ENCODE measurements at regions of chr1 and their contacts with region 1.

Region 1: DNA sequence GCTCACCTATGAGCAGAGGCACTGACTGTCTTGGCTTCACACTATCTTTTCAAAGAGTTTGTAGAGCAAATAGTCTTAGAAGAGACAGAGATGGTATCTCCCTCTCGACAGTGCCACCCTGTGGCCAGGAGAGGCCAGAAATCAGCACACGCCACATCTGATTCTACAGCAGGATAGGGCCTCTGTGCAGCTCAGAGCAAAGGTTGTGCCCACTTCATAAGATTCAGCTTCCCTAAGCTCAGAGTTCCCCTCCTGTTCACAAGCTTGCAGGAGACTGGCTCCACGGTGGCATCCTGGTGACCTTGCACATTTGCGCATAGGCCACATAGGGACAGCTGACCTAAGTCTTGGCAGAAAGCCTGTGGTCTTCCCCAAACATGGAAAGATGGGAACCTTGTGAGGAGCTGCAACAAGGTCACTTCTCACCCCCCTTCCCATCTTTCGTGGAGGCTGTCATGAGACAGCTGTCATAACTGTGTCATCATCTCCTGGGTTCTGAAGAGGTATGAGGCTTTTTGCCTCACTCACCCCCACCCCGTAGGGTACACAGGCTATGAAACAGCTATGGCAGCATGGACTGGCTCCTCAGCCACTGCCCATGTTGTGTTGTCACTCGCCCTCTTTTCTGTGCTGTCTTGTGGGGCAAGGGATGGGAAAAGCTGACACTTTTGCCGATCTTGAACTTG is 3.0 kb downstream of the ITLN2 start:
- DNase-seq: peak; percentile 40
- ATAC-seq: peak; percentile 95
- H3K4me3 ChIP-seq: no peak overlapping the region
- H3K27ac ChIP-seq: no peak overlapping the region
- H3K4me1 ChIP-seq: no peaks in the 10 kb centered on the region
- H3K27me3 ChIP-seq: no peaks in the 10 kb centered on the region
- CTCF ChIP-seq: peak; percentile 80 to 90 (median 89)
- EP300 ChIP-seq: no peak
- POLR2A ChIP-seq: no peak
- RAD21 ChIP-seq: peak; percentile 89

Region 2: DNA sequence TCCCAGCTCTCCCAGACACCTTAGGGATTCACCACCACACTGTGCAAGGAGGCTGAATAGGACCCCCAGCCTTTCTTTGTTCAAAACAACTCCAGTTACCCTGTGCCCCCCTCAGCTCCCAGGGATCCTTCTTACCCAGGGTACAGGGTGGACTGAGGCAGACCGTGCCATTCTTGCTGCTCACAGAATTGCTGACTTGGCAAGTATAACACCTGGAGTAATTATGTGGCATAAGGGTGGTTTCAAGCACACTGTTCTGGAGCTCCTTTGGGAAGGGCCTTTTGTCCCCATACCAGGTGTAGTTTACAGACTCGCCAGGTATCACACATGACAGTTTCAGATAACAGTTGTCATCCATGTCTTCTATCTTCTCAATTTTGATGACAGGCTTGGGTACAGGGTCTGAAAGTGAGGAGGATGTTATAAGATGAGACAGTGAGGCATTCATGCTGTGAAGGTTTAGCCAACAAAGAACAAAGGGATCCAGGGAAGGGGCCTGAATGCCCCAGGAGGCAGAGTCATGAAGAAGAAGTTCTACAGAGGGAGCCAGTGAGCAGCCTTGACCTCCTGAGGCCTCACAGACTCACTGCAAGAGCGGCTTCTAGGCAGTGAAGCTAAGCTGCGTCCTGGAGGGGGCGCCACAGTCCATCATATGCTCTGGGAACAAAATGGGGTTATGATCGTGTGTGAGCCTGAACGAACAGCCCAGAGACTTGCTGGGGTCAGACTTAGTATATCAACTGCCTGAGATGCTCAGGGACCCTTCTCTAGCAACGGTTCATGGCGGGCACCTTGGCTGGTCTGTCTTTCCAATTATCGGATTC is 270.3 kb before region 1 on chr1:
- CTCF ChIA-PET with region 1: interaction called, 42 read pairs
- POLR2A ChIA-PET with region 1: no interaction called
- RAD21 ChIA-PET with region 1: interaction called, 11 read pairs
- SMC1A ChIA-PET with region 1: interaction called, 21 read pairs
- in situ Hi-C with region 1: loop called (anchors 5 kb)
- intact Hi-C with region 1: loop called (anchors 2 kb)
- DNase-seq: no peak
- ATAC-seq: peak; percentile 89
- H3K4me3 ChIP-seq: no peak overlapping the region
- H3K27ac ChIP-seq: peak overlapping the region; percentile 14; the same call in 1 of the 2 replicates
- H3K4me1 ChIP-seq: peaks cover 38% of the 10 kb centered on the region
- H3K27me3 ChIP-seq: no peaks in the 10 kb centered on the region
- CTCF ChIP-seq: peak; percentile 85 to 97 (median 95); a peak in 5 of 6 replicates
- EP300 ChIP-seq: no peak
- POLR2A ChIP-seq: peak; percentile 61; the same call in 1 of the 2 replicates
- RAD21 ChIP-seq: peak; percentile 91

Region 3: DNA sequence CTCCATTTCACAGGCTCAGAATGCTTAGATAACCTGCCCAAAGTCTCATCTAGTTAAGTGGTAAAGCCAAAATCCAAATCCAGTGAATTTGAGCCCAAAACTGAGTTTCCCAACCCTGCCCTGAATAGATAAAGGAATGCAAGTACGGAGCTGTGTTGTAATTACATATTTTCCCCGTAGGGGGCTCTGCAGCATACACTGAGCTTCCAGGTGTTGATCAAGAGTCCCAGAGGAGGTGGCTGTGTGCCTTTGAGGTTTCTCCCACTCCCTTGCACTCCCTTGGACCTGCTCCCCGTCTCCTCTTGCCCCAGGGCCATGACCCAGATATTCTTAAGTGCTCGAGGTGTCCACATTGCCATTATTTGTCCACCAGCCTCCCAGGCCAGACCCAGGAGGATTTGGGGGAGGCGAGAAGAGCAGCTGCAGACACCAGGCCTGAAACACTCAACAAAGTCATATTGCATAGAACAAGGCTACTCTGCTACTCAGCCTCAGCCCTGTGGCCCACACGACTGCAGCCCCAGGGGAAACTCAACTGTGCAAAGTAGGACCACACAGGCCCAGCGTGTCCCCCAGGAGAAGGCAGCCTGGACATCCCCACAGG is 174.0 kb before region 1 on chr1:
- CTCF ChIA-PET with region 1: interaction called, 247 read pairs
- POLR2A ChIA-PET with region 1: interaction called, 6 read pairs
- RAD21 ChIA-PET with region 1: interaction called, 152 read pairs
- SMC1A ChIA-PET with region 1: interaction called, 82 read pairs
- in situ Hi-C with region 1: loop called (anchors 5 kb)
- intact Hi-C with region 1: loop called (anchors 2 kb)
- DNase-seq: no peak
- ATAC-seq: peak; percentile 36
- H3K4me3 ChIP-seq: no peak overlapping the region
- H3K27ac ChIP-seq: no peak overlapping the region
- H3K4me1 ChIP-seq: peaks cover 50% of the 10 kb centered on the region
- H3K27me3 ChIP-seq: no peaks in the 10 kb centered on the region
- CTCF ChIP-seq: peak; percentile 66 to 78 (median 67)
- EP300 ChIP-seq: no peak
- POLR2A ChIP-seq: no peak
- RAD21 ChIP-seq: peak; percentile 81

Region 4: DNA sequence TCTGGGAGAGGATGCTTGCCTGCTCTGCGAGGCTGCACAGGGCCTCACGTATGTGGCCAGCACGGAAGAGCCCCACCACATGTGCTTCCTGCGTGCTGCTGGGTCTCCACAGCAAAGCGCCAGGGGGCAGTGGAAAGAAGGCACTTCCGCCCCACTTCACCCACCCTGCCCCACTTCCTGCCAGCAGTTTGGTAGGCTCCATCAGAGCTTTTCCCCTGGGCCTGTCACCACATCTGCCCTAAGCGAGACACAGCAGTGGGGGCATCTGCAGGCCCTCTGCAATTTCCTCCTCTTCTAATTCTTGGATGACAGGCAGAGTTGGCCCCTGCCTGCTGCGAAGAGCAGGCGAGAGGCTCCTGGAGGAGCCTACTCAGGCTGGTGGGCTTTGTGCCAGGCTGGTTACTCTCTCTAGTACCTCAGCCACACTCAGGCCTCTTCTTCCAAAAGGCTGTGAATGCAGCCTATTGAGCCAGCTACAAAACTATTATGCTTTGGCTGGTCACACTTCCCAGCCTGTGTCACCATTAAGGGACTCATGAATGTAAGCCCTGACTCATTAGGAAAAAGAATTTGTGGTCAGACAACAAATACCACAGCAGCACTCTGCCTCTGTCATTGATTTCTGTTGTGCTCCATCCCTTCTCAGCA is 113.9 kb before region 1 on chr1:
- CTCF ChIA-PET with region 1: interaction called, 349 read pairs
- POLR2A ChIA-PET with region 1: interaction called, 7 read pairs
- RAD21 ChIA-PET with region 1: interaction called, 174 read pairs
- SMC1A ChIA-PET with region 1: interaction called, 212 read pairs
- in situ Hi-C with region 1: loop called (anchors 5 kb)
- intact Hi-C with region 1: loop called (anchors 1 kb)
- DNase-seq: peak; percentile 78
- ATAC-seq: peak; percentile 95
- H3K4me3 ChIP-seq: no peak overlapping the region
- H3K27ac ChIP-seq: peak overlapping the region; percentile 87
- H3K4me1 ChIP-seq: peaks cover 28% of the 10 kb centered on the region
- H3K27me3 ChIP-seq: no peaks in the 10 kb centered on the region
- CTCF ChIP-seq: peak; percentile 47 to 55 (median 53)
- EP300 ChIP-seq: peak in 1 of 2 experiments; percentile 47; a peak in 1 of 4 replicates
- POLR2A ChIP-seq: peak; percentile 70
- RAD21 ChIP-seq: peak; percentile 34; the same call in 1 of the 2 replicates

Region 5: GRCh38 chr1:160868141-160868540 is 83.4 kb before region 1 on chr1:
- CTCF ChIA-PET with region 1: interaction called, 38 read pairs
- POLR2A ChIA-PET with region 1: no interaction called
- RAD21 ChIA-PET with region 1: interaction called, 14 read pairs
- SMC1A ChIA-PET with region 1: interaction called, 41 read pairs
- in situ Hi-C with region 1: no loop called
- intact Hi-C with region 1: no loop called
- DNase-seq: no peak
- ATAC-seq: 0 out of 3 replicates have a peak, but pooled peaks have one; percentile 16
- H3K4me3 ChIP-seq: no peak overlapping the region
- H3K27ac ChIP-seq: no peak overlapping the region
- H3K4me1 ChIP-seq: peaks cover 5% of the 10 kb centered on the region
- H3K27me3 ChIP-seq: no peaks in the 10 kb centered on the region
- CTCF ChIP-seq: no peak
- EP300 ChIP-seq: no peak
- POLR2A ChIP-seq: no peak
- RAD21 ChIP-seq: no peak

Region 6: GRCh38 chr1:160971618-160972056 is 20.1 kb after region 1 on chr1:
- CTCF ChIA-PET with region 1: interaction called, 94 read pairs
- POLR2A ChIA-PET with region 1: interaction called, 3 read pairs
- RAD21 ChIA-PET with region 1: interaction called, 3 read pairs
- SMC1A ChIA-PET with region 1: interaction called, 21 read pairs
- in situ Hi-C with region 1: no loop called
- intact Hi-C with region 1: no loop called
- DNase-seq: peak; percentile 70
- ATAC-seq: peak; percentile 93
- H3K4me3 ChIP-seq: no peak overlapping the region
- H3K27ac ChIP-seq: no peak overlapping the region
- H3K4me1 ChIP-seq: peaks cover 14% of the 10 kb centered on the region
- H3K27me3 ChIP-seq: no peaks in the 10 kb centered on the region
- CTCF ChIP-seq: no peak
- EP300 ChIP-seq: peak; percentile 11 to 56; a peak in 1 of 4 replicates
- POLR2A ChIP-seq: no peak
- RAD21 ChIP-seq: no peak

Region 7: GRCh38 chr1:161098210-161099068 is 146.9 kb after region 1 on chr1 and contains the start of gene KLHDC9:
- CTCF ChIA-PET with region 1: interaction called, 49 read pairs
- POLR2A ChIA-PET with region 1: no interaction called
- RAD21 ChIA-PET with region 1: interaction called, 3 read pairs
- SMC1A ChIA-PET with region 1: interaction called, 13 read pairs
- in situ Hi-C with region 1: no loop called
- intact Hi-C with region 1: no loop called
- DNase-seq: peak; percentile 87
- ATAC-seq: peak; percentile 91
- H3K4me3 ChIP-seq: peak within 1 kb of the TSS; percentile 74
- H3K27ac ChIP-seq: peak within 1 kb of the TSS; percentile 66
- H3K4me1 ChIP-seq: peaks cover 29% of the 10 kb centered on the region
- H3K27me3 ChIP-seq: no peaks in the 10 kb centered on the region
- CTCF ChIP-seq: peak in 2 of 3 experiments; percentile 20 to 22; a peak in 3 of 6 replicates
- EP300 ChIP-seq: no peak; a peak in 1 of 4 replicates
- POLR2A ChIP-seq: no peak
- RAD21 ChIP-seq: no peak
- polyA plus RNA-seq, gene KLHDC9: 0.66 to 1.3 TPM